ENCODE measurements at regions of chr15 and their contacts with region 1.

Region 1: GRCh38 chr15:40694688-40695468 is at the start of gene RAD51:
- DNase-seq: peak; percentile 96
- ATAC-seq: peak; percentile 94
- H3K4me3 Mint-ChIP-seq: peak within 1 kb of the TSS; percentile 100
- H3K27ac Mint-ChIP-seq: peak within 1 kb of the TSS; percentile 100
- H3K4me1 Mint-ChIP-seq: peaks cover 42% of the 10 kb centered on the region
- H3K27me3 Mint-ChIP-seq: no peaks in the 10 kb centered on the region
- total RNA-seq, gene RAD51: 82.7 to 87.3 TPM

Region 2: DNA sequence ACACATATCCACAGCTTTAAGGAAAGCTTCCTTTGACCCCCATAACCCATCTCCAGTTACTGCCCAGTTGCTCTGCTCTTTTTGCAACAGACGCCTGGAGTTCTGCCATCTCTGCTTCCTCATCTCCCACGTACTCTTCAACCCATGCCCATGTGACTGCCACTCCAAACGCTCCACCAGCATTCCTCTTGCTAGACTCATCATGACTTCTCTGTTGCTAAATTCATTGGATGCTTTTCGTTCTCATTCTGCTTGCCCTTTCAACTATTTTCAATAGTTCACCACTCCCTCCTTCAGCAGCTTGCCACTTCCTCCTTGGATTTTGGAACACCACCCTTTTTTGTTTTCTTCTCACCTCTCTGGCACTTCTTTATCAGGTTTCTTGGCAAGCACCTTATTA is 315.0 kb before region 1 on chr15:
- CTCF ChIA-PET with region 1: no interaction called
- POLR2A ChIA-PET with region 1: no interaction called
- DNase-seq: no peak
- ATAC-seq: no peak
- H3K4me3 Mint-ChIP-seq: no peak overlapping the region
- H3K27ac Mint-ChIP-seq: no peak overlapping the region
- H3K4me1 Mint-ChIP-seq: peaks cover 19% of the 10 kb centered on the region
- H3K27me3 Mint-ChIP-seq: peaks cover 16% of the 10 kb centered on the region

Region 3: GRCh38 chr15:40550341-40551037 is 144.4 kb before region 1 on chr15:
- CTCF ChIA-PET with region 1: no interaction called
- POLR2A ChIA-PET with region 1: no interaction called
- DNase-seq: no peak
- ATAC-seq: no peak
- H3K4me3 Mint-ChIP-seq: no peak overlapping the region
- H3K27ac Mint-ChIP-seq: no peak overlapping the region
- H3K4me1 Mint-ChIP-seq: no peaks in the 10 kb centered on the region
- H3K27me3 Mint-ChIP-seq: no peaks in the 10 kb centered on the region

Region 4: GRCh38 chr15:40684381-40684780 is 10.5 kb before region 1 on chr15:
- CTCF ChIA-PET with region 1: interaction called, 12 read pairs
- POLR2A ChIA-PET with region 1: interaction called, 6 read pairs
- DNase-seq: no peak
- ATAC-seq: no peak
- H3K4me3 Mint-ChIP-seq: no peak overlapping the region
- H3K27ac Mint-ChIP-seq: no peak overlapping the region
- H3K4me1 Mint-ChIP-seq: no peaks in the 10 kb centered on the region
- H3K27me3 Mint-ChIP-seq: no peaks in the 10 kb centered on the region

Region 5: GRCh38 chr15:40743921-40744814 is 49.3 kb after region 1 on chr15:
- CTCF ChIA-PET with region 1: interaction called, 7 read pairs
- POLR2A ChIA-PET with region 1: interaction called, 11 read pairs
- DNase-seq: peak; percentile 85
- ATAC-seq: peak; percentile 94
- H3K4me3 Mint-ChIP-seq: peak overlapping the region; percentile 35
- H3K27ac Mint-ChIP-seq: peak overlapping the region; percentile 87
- H3K4me1 Mint-ChIP-seq: peaks cover 45% of the 10 kb centered on the region
- H3K27me3 Mint-ChIP-seq: no peaks in the 10 kb centered on the region

Region 6: DNA sequence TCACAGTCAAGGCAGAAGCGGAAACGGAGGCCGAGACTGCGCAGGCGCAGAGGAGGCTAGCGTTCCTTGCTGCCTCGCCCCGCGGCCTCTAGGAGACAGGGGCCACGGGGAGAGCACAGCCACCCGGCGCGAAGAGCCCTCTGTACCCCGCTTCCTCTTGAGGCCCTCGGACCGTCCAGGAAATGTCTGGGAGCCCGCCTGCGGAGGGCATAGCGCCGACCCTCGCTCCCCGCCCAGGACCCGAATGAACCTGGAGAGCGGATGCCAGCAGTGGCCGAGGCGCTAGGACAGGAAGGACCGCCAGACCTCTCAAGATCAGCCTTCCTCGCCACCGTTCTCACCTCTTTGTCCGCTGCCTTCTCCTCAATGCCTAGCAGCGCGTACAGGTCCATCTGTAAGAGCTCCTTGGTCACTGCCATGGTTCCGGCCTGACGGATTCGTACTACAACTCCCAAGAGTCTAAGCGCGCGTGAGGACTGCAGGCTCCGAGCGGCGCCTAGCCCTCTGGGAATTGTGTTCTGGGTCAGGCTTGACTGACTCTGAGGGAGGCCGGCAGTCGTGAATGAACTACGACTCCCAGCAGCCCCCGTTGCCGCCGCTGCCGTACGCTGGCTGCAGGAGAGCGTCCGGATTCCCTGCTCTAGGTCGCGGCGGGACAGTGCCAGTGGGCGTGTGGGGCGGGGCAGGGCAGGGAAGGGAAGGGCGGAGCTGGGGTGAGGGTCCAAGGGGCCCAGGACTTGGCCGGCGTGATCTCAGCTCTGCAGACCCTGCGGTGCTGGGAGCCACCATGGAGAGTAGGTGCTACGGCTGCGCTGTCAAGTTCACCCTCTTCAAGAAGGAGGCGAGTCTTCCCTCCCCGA is 112.4 kb after region 1 on chr15 and contains the starts of genes DNAJC17 and ZFYVE19:
- CTCF ChIA-PET with region 1: no interaction called
- POLR2A ChIA-PET with region 1: interaction called, 12 read pairs
- DNase-seq: peak; percentile 97
- ATAC-seq: peak; percentile 98
- H3K4me3 Mint-ChIP-seq: peak within 1 kb of the TSS; percentile 94
- H3K27ac Mint-ChIP-seq: peak within 1 kb of the TSS; percentile 99
- H3K4me1 Mint-ChIP-seq: peaks cover 20% of the 10 kb centered on the region
- H3K27me3 Mint-ChIP-seq: no peaks in the 10 kb centered on the region
- total RNA-seq, gene DNAJC17: 42.9 to 47.2 TPM
- total RNA-seq, gene ZFYVE19: 29.4 to 35.6 TPM